ENCODE measurements at regions of chr7 and their contacts with region 1.

Region 1: GRCh38 chr7:74514131-74514591 is 60.5 kb downstream of the GTF2IRD1 start:
- DNase-seq: peak in 4 of 5 donors; percentile 32 to 66 (median 60)
- ATAC-seq: peak; percentile 70 to 88 (median 82)
- H3K4me3 ChIP-seq: no peak overlapping the region
- H3K27ac ChIP-seq: peak overlapping the region in 10 of 12 donors; percentile 62 to 87 (median 70)
- H3K4me1 ChIP-seq: peaks cover 0 to 27% (median 4%) of the 10 kb centered on the region in 12 donors
- H3K27me3 ChIP-seq: no peaks in the 10 kb centered on the region
- CTCF ChIP-seq: no peak
- POLR2A ChIP-seq: no peak

Region 2: GRCh38 chr7:74489997-74490945 is 23.9 kb before region 1 on chr7:
- intact Hi-C with region 1: no loop called
- DNase-seq: no peak
- ATAC-seq: peak in 1 of 4 donors; percentile 12
- H3K4me3 ChIP-seq: no peak overlapping the region
- H3K27ac ChIP-seq: no peak overlapping the region
- H3K4me1 ChIP-seq: peaks cover 0 to 4% (median 0%) of the 10 kb centered on the region in 12 donors
- H3K27me3 ChIP-seq: no peaks in the 10 kb centered on the region
- CTCF ChIP-seq: no peak
- POLR2A ChIP-seq: no peak

Region 3: GRCh38 chr7:74575138-74575727 is 61.1 kb after region 1 on chr7:
- intact Hi-C with region 1: loop called in 1 of 10 experiments (anchors 10 kb)
- DNase-seq: no peak
- ATAC-seq: no peak
- H3K4me3 ChIP-seq: no peak overlapping the region
- H3K27ac ChIP-seq: no peak overlapping the region
- H3K4me1 ChIP-seq: peaks cover 0 to 7% (median 0%) of the 10 kb centered on the region in 12 donors
- H3K27me3 ChIP-seq: no peaks in the 10 kb centered on the region
- CTCF ChIP-seq: no peak
- POLR2A ChIP-seq: no peak

Measured in heart left ventricle (tissue), 16 donors.